Breast epithelium (tissue), 4 donors: ENCODE measurements at regions of chr1 and their contacts with region 1.

Region 1: GRCh38 chr1:12549460-12550349 is 68.3 kb downstream of the DHRS3 start:
- DNase-seq: peak; percentile 75 to 82
- H3K4me3 ChIP-seq: peak overlapping the region in 2 of 3 donors; percentile 4 to 49
- H3K27ac ChIP-seq: peak overlapping the region; percentile 83 to 89
- H3K4me1 ChIP-seq: peaks cover 7 to 14% of the 10 kb centered on the region in 2 donors
- H3K27me3 ChIP-seq: no peaks in the 10 kb centered on the region
- CTCF ChIP-seq: no peak
- POLR2A ChIP-seq: no peak

Region 2: GRCh38 chr1:12619792-12620487 is 70.2 kb after region 1 on chr1:
- intact Hi-C with region 1: loop called (anchors 5 kb)
- DNase-seq: peak; percentile 88
- H3K4me3 ChIP-seq: peak overlapping the region; percentile 73 to 92 (median 83)
- H3K27ac ChIP-seq: peak overlapping the region; percentile 94 to 97
- H3K4me1 ChIP-seq: peaks cover 17 to 29% of the 10 kb centered on the region in 2 donors
- H3K27me3 ChIP-seq: no peaks in the 10 kb centered on the region
- CTCF ChIP-seq: peak; percentile 97 to 98 (median 98)
- POLR2A ChIP-seq: no peak